GM13976 (cell line): ENCODE measurements at regions of chrX and their contacts with region 1.

Region 1: DNA sequence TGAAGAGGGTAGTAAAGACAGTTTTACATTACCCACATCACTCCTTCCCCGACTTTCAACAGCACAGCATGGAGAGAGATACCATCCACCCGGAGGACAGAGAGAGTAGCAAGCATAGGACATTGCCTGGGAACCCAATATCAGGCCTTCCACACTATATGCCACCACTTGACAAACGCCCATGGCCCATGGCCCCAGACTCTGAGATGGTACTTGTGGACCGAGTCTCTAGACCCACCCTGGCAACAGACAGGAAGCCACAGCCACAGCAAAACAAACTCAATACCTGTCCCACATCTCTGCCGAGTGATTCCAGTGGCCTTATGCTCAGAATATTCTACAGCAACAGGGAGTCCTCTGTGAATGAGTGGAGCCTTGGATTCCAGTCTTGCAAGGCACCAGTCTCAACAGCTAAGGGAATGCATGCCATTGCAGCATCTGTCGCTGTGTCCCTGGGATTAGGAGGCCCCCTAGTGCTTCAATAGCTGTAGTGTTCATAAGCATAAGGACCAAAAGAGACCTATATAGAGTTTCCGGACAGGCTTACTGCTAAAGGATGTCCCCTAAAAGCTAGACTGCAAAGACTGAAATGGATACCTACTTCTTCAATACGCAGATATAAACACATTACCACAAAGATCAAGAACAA is 14.7 kb upstream of the CT55 start:
- DNase-seq: peak; percentile 48
- CTCF ChIP-seq: no peak

Region 2: DNA sequence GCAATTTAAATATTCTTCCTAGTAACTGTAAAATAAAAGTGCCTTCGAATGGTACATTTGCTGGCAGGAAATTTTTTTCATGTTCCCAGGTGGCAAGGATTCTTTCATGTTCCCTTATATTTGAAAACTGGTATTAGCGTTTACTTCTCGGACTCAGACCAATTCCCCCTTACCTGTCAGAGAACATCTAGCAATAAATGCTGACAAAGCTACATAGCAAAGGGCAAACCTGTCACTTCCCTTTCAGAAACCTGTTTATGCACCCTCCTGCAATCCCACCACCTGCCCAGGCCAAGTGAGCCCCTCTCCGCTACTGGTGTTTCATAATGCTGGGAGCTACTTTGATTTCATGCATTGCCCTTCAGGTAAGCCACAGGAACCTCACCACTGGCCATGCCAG is 627.8 kb before region 1 on chrX:
- in situ Hi-C with region 1: no loop called
- DNase-seq: no peak
- CTCF ChIP-seq: no peak

Region 3: DNA sequence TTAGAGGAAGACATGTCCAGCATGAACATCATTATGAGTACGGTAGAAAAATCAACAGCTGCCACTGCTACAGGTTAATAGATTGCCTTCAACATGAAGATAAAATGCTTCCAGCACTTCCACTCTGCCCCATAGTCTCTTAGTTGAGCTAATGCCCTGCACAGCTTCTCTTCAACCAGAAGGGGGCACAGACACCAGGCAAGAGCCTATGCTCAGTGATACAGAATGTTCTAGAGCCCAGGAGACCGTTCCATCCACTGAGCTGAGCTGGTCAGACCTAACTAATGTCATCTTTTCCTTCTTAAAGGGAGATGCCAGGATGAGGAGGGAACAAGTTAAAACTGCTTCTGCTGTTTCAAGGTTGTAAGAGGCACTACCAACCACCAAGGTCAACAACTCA is 278.0 kb after region 1 on chrX:
- in situ Hi-C with region 1: loop called (anchors 25 kb)
- DNase-seq: no peak
- CTCF ChIP-seq: peak; percentile 38